A673 (cell line): ENCODE measurements at regions of chr1 and their contacts with region 1.

Region 1: DNA sequence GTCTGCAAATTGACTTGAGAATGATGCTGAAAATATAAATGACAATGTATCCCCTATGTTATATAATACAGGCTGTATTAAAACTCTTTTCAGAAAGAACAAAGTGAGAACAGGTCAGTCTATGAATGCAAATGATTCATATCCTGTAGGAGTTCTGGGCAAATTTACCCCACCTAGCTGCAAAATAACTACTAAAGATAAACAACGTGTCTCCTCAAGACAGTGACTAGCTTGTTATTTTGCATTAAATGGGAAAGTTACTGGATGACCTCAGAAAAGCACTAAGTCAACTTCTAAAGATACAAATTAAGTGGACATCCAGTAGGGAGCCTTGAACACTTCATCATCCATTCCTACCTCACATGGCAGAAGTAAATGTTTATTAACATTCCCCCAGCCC is 11.1 kb downstream of the RNF19B start:
- DNase-seq: no peak
- H3K4me3 ChIP-seq: no peak overlapping the region
- H3K27ac ChIP-seq: no peak overlapping the region
- H3K4me1 ChIP-seq: no peaks in the 10 kb centered on the region
- H3K27me3 ChIP-seq: no peaks in the 10 kb centered on the region
- CTCF ChIP-seq: no peak

Region 2: GRCh38 chr1:33055210-33056008 is 101.9 kb after region 1 on chr1:
- CTCF ChIA-PET with region 1: interaction called, 10 read pairs
- POLR2A ChIA-PET with region 1: no interaction called
- intact Hi-C with region 1: no loop called
- DNase-seq: peak; percentile 64
- H3K4me3 ChIP-seq: no peak overlapping the region
- H3K27ac ChIP-seq: no peak overlapping the region
- H3K4me1 ChIP-seq: no peaks in the 10 kb centered on the region
- H3K27me3 ChIP-seq: no peaks in the 10 kb centered on the region
- CTCF ChIP-seq: peak; percentile 66

Region 3: DNA sequence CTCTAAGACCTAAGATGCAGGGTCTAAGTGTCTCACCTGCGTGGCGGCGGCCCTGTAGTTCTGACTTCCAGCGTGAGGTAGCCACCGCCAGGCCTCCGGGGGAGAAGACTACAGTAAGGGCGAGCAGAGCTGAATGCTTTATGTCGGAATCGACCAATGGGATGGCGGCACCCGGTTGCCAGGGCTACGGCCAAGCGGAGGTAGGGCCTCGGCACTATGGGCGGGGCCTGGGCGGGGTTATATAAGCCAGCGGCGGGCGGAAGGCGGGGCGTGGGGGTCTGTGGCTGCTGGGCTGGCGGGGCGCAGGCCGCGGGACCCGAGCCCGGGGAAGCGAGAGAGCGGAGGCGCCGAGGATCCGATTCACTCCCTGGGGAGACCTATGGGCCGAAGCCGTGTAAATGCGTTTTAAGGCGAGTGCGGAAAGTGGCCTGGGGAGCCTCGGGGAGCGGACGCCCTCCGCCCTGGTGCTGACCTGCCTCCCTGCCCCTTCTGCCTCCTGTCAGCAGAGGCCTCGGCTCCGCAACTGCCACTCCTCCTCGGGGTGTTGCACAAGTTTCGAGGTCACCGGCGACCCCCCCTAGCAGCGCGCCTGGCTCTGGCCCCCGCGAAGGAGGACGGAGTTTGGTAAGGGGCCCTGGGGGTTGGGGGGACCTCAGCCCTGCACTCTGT is 127.5 kb after region 1 on chr1 and contains the start of gene AZIN2:
- CTCF ChIA-PET with region 1: no interaction called
- POLR2A ChIA-PET with region 1: no interaction called
- intact Hi-C with region 1: no loop called
- DNase-seq: peak; percentile 95
- H3K4me3 ChIP-seq: peak within 1 kb of the TSS; percentile 68
- H3K27ac ChIP-seq: peak within 1 kb of the TSS; percentile 58
- H3K4me1 ChIP-seq: peaks cover 4% of the 10 kb centered on the region
- H3K27me3 ChIP-seq: no peaks in the 10 kb centered on the region
- CTCF ChIP-seq: no peak
- total RNA-seq, gene AZIN2: 3.6 and 4.6 TPM in 2 replicates